Posterior vena cava (tissue), 2 donors: ENCODE measurements at regions of chr1 and their contacts with region 1.

Region 1: DNA sequence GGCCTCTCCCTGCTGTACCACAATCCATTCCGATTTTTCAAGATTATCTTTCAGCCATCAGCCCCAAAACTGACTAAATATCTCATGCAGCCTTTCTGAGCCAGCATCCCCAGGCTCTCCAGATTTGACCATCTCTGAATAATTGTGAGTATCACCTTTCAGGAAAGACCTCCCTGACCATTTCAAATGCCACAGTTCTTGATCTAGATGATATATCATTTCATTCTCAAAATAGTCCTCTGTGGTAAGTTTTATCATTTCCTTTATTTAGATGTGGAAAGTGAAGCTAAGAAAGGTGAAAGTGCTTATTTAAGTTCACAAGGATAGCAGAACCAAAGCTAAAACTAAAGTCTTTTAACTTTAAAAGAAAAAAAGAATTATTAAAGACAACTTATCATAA is 244.0 kb downstream of the PLPP3 start:
- DNase-seq: no peak

Region 2: DNA sequence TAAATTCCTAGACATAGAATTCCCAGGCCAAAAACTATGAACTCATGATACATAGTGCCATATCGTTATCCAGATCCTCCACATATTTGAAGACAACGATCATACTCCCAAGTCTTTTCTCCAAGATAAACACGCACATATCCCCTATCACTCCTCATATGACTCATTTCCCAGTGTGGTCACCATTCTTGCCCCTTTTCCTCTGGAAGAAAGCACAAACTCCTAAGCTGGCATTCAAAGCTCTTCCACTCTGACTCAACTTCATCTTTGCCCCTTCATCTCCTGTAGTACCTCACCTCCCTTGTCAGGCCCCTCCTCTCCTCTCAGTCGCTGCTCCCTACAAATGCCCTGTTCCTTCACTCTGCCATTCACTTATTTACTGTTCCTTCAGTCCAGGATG is 33.5 kb before region 1 on chr1:
- intact Hi-C with region 1: loop called in 1 of 2 experiments (anchors 1 kb)
- DNase-seq: no peak